Mammary epithelial cell (primary cell): ENCODE measurements at regions of chr12 and their contacts with region 1.

Region 1: GRCh38 chr12:5083955-5084849 is 40.5 kb downstream of the KCNA5 start:
- DNase-seq: peak; percentile 40
- H3K4me3 ChIP-seq: no peak overlapping the region
- H3K27ac ChIP-seq: no peak overlapping the region
- H3K4me1 ChIP-seq: peaks cover 9% of the 10 kb centered on the region
- H3K27me3 ChIP-seq: no peaks in the 10 kb centered on the region
- CTCF ChIP-seq: peak; percentile 51 to 78

Region 2: GRCh38 chr12:5003020-5003666 is 81.1 kb before region 1 on chr12:
- CTCF ChIA-PET with region 1: no interaction called
- dilution Hi-C with region 1: no loop called
- in situ Hi-C with region 1: no loop called
- intact Hi-C with region 1: loop called (anchors 5 kb)
- DNase-seq: peak; percentile 41
- H3K4me3 ChIP-seq: no peak overlapping the region
- H3K27ac ChIP-seq: no peak overlapping the region
- H3K4me1 ChIP-seq: no peaks in the 10 kb centered on the region
- H3K27me3 ChIP-seq: peaks cover 1% of the 10 kb centered on the region
- CTCF ChIP-seq: peak; percentile 98 to 100

Region 3: GRCh38 chr12:5043589-5044419 is 40.4 kb before region 1 on chr12 and contains the start of gene KCNA5:
- CTCF ChIA-PET with region 1: no interaction called
- dilution Hi-C with region 1: no loop called
- in situ Hi-C with region 1: no loop called
- intact Hi-C with region 1: no loop called
- DNase-seq: no peak
- H3K4me3 ChIP-seq: no peak within 1 kb of the TSS
- H3K27ac ChIP-seq: no peak within 1 kb of the TSS
- H3K4me1 ChIP-seq: no peaks in the 10 kb centered on the region
- H3K27me3 ChIP-seq: peaks cover 23% of the 10 kb centered on the region
- CTCF ChIP-seq: no peak
- total RNA-seq, gene KCNA5: not detected